ENCODE measurements at regions of chrX and their contacts with region 1.

Region 1: DNA sequence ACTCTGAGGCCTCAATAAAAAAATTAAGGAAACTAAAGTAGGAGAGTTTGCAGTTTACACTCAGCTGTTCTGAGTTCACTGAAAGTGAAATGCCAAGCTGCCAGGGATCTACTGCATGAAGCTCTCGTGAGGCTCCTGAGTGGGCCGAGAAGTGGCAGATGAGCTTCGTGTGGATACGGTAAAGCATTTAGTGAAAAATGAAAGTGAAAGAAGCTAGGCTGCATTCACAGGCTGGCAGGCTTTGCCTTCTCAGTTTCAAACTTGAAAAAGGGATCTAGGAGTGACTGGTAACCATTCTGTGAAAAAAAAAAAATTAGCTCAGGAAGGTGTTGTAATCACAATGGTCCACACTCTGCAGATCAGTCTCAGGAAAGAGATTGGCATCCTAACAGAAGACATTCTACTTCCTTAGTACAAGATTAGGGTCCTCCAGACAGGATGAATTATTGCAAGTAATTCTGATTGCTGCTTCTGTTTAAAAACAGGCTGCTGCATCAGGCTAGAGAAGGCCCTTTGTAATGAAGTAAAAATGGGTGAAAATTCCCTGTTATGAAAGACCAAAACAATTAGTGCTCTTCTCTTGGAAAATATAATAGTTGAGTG is 679.9 kb downstream of the RPA4 start:
- DNase-seq: peak; percentile 26 to 40
- H3K4me3 ChIP-seq: peak overlapping the region; percentile 6 to 7
- H3K27ac ChIP-seq: peak overlapping the region; percentile 51 to 77
- H3K4me1 ChIP-seq: no peaks in the 10 kb centered on the region
- H3K27me3 ChIP-seq: no peaks in the 10 kb centered on the region
- CTCF ChIP-seq: no peak
- POLR2A ChIP-seq: no peak

Region 2: DNA sequence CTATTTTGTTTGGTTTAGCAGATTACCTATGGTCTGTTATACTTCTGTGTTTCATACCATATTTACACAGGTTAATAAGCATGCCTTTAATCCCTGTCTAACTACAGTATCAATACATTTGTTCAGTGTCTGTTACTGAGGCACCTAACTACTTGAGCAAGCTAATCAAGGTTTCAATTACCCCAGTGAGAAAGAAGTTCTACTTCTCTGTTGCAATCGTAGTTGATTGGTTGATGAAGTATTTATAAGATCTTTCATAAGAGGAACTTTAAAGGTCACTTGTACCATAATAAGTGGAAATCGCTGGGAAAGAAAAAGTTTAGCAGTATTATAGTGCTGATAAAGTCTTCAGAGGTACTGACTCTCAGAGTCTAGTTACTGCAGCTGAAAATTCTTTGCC is 189.4 kb before region 1 on chrX:
- intact Hi-C with region 1: no loop called
- DNase-seq: no peak
- H3K4me3 ChIP-seq: no peak overlapping the region
- H3K27ac ChIP-seq: no peak overlapping the region
- H3K4me1 ChIP-seq: no peaks in the 10 kb centered on the region
- H3K27me3 ChIP-seq: no peaks in the 10 kb centered on the region
- CTCF ChIP-seq: no peak
- POLR2A ChIP-seq: no peak

Region 3: DNA sequence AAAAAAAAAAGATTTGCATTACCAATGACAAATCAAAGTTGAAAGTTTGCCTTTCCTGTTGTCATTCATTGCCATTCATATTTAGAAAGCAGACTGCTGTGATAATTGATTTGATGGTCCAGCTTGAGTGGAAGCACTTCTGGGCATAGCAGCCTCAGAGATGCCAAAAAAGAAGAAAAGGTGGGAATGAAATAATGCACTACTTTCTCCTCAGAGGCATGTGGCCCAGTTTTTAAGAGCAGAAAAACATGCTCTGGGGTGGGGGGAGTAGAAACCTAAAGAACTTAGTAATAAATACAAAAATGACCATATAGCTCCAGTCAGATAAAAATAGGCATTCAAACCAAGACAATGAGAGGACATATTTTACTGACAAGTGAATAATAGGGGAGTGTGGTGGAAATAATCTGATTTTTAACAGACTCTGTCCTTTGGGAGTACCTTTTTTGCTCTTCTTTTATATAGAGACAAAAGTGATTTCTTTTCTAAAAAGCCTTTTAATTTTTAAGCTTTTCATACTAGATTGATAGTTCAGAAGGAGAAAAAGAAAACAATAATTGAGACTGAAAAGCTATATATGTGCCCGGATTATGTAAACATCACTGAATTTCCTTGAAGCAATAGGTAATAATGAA is 80.8 kb before region 1 on chrX:
- intact Hi-C with region 1: no loop called
- DNase-seq: no peak
- H3K4me3 ChIP-seq: no peak overlapping the region
- H3K27ac ChIP-seq: no peak overlapping the region
- H3K4me1 ChIP-seq: no peaks in the 10 kb centered on the region
- H3K27me3 ChIP-seq: no peaks in the 10 kb centered on the region
- CTCF ChIP-seq: no peak
- POLR2A ChIP-seq: no peak

Region 4: DNA sequence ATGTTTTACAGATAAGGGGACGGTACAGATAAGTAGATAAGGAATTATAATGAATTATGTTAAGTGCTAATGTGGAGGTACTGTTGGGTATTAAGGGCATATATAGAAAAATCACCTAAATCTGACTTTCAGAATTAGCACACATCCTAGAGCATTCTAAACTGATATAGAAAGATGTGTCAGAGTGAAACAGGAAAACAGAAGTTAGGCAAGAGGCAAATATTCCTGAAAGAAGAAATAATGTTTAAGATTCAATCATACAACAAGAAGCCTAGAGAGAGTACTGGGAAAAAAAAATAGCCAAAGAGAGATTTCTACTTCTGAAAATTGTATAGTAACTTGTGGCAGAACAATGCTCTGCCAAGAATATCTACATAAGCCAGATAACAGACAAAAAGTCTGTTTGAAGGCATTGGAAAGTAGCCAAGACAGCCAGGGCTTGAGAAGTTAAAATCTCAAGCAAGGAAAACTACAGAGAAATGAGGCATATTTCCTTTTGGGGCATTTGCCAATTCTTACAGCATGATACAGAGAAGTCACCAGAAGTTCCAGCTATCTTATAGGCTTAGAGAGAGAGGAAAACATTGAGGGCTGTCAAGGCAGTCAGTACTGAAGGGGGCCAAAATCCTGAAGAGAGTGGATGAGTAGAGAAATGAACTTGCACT is 34.0 kb before region 1 on chrX:
- intact Hi-C with region 1: loop called (anchors 2 kb)
- DNase-seq: no peak
- H3K4me3 ChIP-seq: no peak overlapping the region
- H3K27ac ChIP-seq: no peak overlapping the region
- H3K4me1 ChIP-seq: no peaks in the 10 kb centered on the region
- H3K27me3 ChIP-seq: no peaks in the 10 kb centered on the region
- CTCF ChIP-seq: no peak
- POLR2A ChIP-seq: no peak

Region 5: GRCh38 chrX:97597954-97598353 is 34.3 kb after region 1 on chrX:
- intact Hi-C with region 1: no loop called
- DNase-seq: no peak
- H3K4me3 ChIP-seq: no peak overlapping the region
- H3K27ac ChIP-seq: no peak overlapping the region
- H3K4me1 ChIP-seq: no peaks in the 10 kb centered on the region
- H3K27me3 ChIP-seq: no peaks in the 10 kb centered on the region
- CTCF ChIP-seq: no peak
- POLR2A ChIP-seq: no peak